Activated T-helper 2 cell treated with anti-CD3 and anti-CD28 coated beads, Interferon-gamma antibody, Interleukin-2, Interleukin-4, amounts not matched to agents 10 μg/mL and 5 μg/mL and 100 μg/mL, durations not matched to agents 14 hours and 24 hours and 36 hours (primary cell): ENCODE measurements at regions of chr4 and their contacts with region 1.

Region 1: DNA sequence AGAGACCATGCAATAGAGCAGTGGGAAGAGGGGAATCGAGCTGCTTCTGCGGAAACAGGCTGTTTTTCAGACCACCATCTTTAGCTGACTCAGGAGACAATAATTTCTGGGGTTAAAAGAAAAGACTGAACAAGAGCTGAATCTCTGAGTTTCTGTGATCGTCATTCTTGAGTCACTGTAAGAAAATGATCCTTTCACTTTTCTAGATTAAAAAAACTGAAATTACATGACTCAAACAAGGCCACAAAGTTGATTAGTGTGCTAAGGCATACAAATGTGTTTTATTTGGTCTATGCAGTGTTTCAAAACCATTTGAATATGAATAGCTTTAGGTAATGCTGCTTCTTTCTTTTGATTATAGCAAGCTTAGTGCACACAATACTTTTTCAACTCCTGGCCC is 194.4 kb upstream of the RPL34 start:
- DNase-seq: no peak
- H3K4me3 Mint-ChIP-seq: no peak overlapping the region
- H3K27ac Mint-ChIP-seq: no peak overlapping the region
- H3K4me1 Mint-ChIP-seq: peaks cover 19% of the 10 kb centered on the region
- H3K27me3 Mint-ChIP-seq: peaks cover 13% of the 10 kb centered on the region

Region 2: DNA sequence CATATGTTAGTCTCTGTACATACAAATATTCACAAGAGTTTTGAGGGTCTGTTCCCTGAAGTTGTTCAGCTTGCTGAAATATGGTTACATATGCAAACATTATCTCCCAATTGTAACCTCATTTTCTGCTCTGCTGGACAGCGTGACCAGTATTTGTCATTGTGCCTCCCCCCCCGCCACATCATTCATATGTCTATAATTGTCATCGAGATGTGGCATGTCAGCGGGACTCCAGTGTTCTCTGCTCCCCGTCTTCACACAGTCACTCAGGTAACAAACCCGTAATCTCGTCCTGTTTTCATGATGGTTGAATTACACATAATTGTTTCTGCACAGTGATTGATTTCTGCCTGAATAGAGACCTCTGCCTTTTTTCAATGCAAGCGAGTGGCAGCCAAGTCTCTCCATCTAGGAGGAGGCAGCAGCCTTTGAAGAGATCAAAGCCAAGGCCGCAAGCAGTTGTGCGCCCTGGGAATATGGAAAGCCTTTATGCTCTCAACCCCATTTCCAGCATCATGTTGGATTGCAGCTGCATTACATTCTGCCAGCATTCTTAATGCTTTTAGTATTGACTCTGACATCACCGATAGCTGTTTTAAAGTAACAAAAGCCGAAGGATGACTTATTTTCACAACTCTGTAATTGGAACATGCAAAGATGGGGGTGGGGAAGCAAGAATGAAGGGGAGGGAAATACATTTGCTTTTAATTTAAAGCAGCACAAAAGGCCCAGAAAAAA is 284.6 kb before region 1 on chr4:
- intact Hi-C with region 1: loop called (anchors 10 kb)
- DNase-seq: no peak
- H3K4me3 Mint-ChIP-seq: peak overlapping the region; percentile 72
- H3K27ac Mint-ChIP-seq: peak overlapping the region; percentile 65
- H3K4me1 Mint-ChIP-seq: peaks cover 81% of the 10 kb centered on the region
- H3K27me3 Mint-ChIP-seq: no peaks in the 10 kb centered on the region

Region 3: GRCh38 chr4:108355186-108355901 is 70.6 kb before region 1 on chr4:
- intact Hi-C with region 1: loop called (anchors 5 kb)
- DNase-seq: peak; percentile 14
- H3K4me3 Mint-ChIP-seq: no peak overlapping the region
- H3K27ac Mint-ChIP-seq: no peak overlapping the region
- H3K4me1 Mint-ChIP-seq: peaks cover 46% of the 10 kb centered on the region
- H3K27me3 Mint-ChIP-seq: peaks cover 3% of the 10 kb centered on the region

Region 4: GRCh38 chr4:108483079-108483478 is 57.1 kb after region 1 on chr4:
- intact Hi-C with region 1: loop called (anchors 2 kb)
- DNase-seq: peak; percentile 35
- H3K4me3 Mint-ChIP-seq: peak overlapping the region; percentile 60
- H3K27ac Mint-ChIP-seq: peak overlapping the region; percentile 69
- H3K4me1 Mint-ChIP-seq: peaks cover 36% of the 10 kb centered on the region
- H3K27me3 Mint-ChIP-seq: peaks cover 4% of the 10 kb centered on the region

Region 5: DNA sequence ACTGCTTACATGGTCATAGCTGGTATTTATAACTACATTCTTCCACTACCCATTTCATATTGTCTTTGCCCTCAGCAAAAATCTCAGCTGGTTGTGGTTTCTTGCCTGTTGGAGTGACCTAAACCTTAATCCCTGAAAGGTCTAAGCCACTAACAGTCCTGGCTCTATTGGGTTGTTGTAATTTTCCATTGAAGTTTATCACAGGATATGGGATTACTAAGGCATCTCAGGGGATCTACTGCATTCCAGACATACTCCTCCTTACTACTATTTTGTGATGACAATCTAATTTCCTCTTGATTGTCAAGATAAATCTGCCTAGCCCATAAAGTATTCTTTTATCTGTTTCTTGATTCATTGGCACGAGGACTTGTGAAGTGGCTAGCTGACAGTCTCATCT is 218.2 kb after region 1 on chr4:
- intact Hi-C with region 1: no loop called
- DNase-seq: no peak
- H3K4me3 Mint-ChIP-seq: no peak overlapping the region
- H3K27ac Mint-ChIP-seq: no peak overlapping the region
- H3K4me1 Mint-ChIP-seq: peaks cover 2% of the 10 kb centered on the region
- H3K27me3 Mint-ChIP-seq: no peaks in the 10 kb centered on the region